Naive thymus-derived CD4-positive, alpha-beta T cell (primary cell): ENCODE measurements at regions of chr1 and their contacts with region 1.

Region 1: GRCh38 chr1:56709269-56709880 is 64.3 kb downstream of the PRKAA2 start:
- DNase-seq: peak in 7 of 9 donors; percentile 0 to 25 (median 4)
- ATAC-seq: no peak
- H3K4me3 ChIP-seq: no peak overlapping the region
- H3K4me3 Mint-ChIP-seq: no peak overlapping the region
- H3K27ac ChIP-seq: no peak overlapping the region
- H3K27ac Mint-ChIP-seq: peak overlapping the region in 1 of 9 donors; percentile 28
- H3K4me1 ChIP-seq: no peaks in the 10 kb centered on the region
- H3K4me1 Mint-ChIP-seq: no peaks in the 10 kb centered on the region
- H3K27me3 ChIP-seq: no peaks in the 10 kb centered on the region
- H3K27me3 Mint-ChIP-seq: peaks cover 7 to 44% (median 17%) of the 10 kb centered on the region in 5 donors

Region 2: DNA sequence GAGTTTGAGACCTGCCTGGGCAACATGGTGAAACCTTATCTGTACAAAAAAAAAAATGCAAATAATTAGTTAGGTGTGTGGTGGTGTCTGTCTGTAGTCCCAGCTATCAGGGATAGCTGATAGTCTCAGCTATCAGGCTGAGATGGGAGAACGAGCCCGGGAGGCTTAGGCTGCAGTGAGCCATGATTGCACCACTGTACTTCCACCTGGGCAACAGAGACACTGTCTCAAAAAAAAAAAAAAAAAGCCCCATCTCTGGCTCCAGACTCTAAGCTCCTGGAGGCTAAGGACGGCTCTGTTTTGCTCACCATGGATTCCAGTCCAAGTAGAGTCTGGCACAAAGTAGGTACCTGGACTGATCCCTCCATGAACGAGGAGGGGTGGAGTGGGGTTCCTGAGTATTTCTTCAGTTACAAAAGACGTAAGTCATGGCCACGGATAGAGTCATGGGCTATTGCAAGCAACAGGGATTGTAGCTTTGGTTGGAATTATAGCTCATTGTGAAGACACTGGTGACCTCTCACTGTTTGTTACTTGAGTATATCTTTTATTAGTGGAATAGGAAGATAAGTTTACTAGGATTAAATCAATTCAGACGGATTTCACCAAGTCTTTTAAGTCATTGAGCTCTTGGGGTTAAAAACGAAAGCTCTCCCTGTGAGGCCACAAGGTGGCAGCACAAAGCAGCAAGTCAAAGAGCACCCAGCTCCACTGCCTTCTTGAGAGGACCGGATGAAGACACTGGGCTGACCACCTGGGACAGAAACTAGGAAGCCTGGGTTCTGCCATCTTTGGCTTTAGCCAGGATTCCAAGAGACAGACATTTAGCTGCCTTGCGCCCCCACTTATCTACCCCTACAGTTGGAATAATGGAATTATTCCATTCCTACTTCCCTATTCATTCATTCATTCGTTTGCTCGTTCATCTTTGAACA is 1764.5 kb before region 1 on chr1:
- CTCF ChIA-PET with region 1: interaction called, 3 read pairs
- POLR2A ChIA-PET with region 1: no interaction called
- intact Hi-C with region 1: loop called in 1 of 2 experiments (anchors 10 kb)
- DNase-seq: peak; percentile 17 to 61 (median 45)
- ATAC-seq: peak; percentile 80
- H3K4me3 ChIP-seq: no peak overlapping the region
- H3K4me3 Mint-ChIP-seq: peak overlapping the region in 1 of 10 donors; percentile 28
- H3K27ac ChIP-seq: no peak overlapping the region
- H3K27ac Mint-ChIP-seq: no peak overlapping the region
- H3K4me1 ChIP-seq: peaks cover 3 to 7% of the 10 kb centered on the region in 2 donors
- H3K4me1 Mint-ChIP-seq: peaks cover 9 to 16% (median 11%) of the 10 kb centered on the region in 7 donors
- H3K27me3 ChIP-seq: no peaks in the 10 kb centered on the region
- H3K27me3 Mint-ChIP-seq: peaks cover 0 to 11% (median 0%) of the 10 kb centered on the region in 5 donors

Region 3: GRCh38 chr1:55140546-55140983 is 1568.8 kb before region 1 on chr1:
- CTCF ChIA-PET with region 1: no interaction called
- POLR2A ChIA-PET with region 1: no interaction called
- intact Hi-C with region 1: loop called in 1 of 2 experiments (anchors 10 kb)
- DNase-seq: peak in 8 of 9 donors; percentile 51 to 79 (median 71)
- ATAC-seq: peak; percentile 97
- H3K4me3 ChIP-seq: no peak overlapping the region
- H3K4me3 Mint-ChIP-seq: peak overlapping the region in 1 of 10 donors; percentile 53
- H3K27ac ChIP-seq: no peak overlapping the region
- H3K27ac Mint-ChIP-seq: peak overlapping the region in 8 of 9 donors; percentile 55 to 76 (median 65)
- H3K4me1 ChIP-seq: peaks cover 0 to 5% of the 10 kb centered on the region in 2 donors
- H3K4me1 Mint-ChIP-seq: peaks cover 0 to 18% (median 12%) of the 10 kb centered on the region in 7 donors
- H3K27me3 ChIP-seq: no peaks in the 10 kb centered on the region
- H3K27me3 Mint-ChIP-seq: no peaks in the 10 kb centered on the region

Region 4: GRCh38 chr1:55284852-55285251 is 1424.5 kb before region 1 on chr1:
- CTCF ChIA-PET with region 1: interaction called, 3 read pairs
- POLR2A ChIA-PET with region 1: no interaction called
- intact Hi-C with region 1: loop called (anchors 5 to 10 kb)
- DNase-seq: peak in 1 of 9 donors; percentile 8
- ATAC-seq: no peak
- H3K4me3 ChIP-seq: no peak overlapping the region
- H3K4me3 Mint-ChIP-seq: no peak overlapping the region
- H3K27ac ChIP-seq: no peak overlapping the region
- H3K27ac Mint-ChIP-seq: no peak overlapping the region
- H3K4me1 ChIP-seq: no peaks in the 10 kb centered on the region
- H3K4me1 Mint-ChIP-seq: no peaks in the 10 kb centered on the region
- H3K27me3 ChIP-seq: no peaks in the 10 kb centered on the region
- H3K27me3 Mint-ChIP-seq: peaks cover 0 to 14% (median 0%) of the 10 kb centered on the region in 5 donors

Region 5: DNA sequence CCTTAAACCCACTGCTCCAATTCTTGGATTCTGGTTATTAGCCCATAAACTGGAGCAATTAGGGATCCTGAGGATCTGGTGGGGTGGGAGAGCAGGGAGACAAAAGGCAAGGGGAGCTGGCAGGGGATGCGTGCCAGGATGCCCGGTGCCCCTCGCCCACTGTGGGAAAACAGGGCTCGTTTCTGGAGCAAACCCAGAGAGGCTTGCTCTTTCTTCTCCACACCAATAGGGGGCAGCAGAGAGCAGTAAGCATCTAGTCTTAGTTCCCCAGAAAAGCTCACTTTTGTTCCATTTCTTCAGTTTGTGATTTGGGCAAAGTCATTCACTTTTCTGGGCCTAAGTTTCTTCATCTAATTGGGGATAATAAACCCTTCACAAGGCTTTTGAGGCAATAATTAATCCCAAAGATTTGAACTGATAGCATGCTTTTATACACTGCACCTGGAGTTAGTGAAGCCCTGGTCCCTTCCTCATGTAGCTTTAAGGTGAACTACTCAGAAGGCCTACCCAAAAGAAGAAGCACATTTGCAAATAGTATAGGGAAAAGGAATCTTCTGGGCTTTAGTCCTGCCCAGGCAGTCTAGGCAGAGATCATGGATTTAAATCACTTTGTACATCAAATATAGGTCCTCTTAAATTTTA is 1333.6 kb before region 1 on chr1:
- CTCF ChIA-PET with region 1: no interaction called
- POLR2A ChIA-PET with region 1: no interaction called
- intact Hi-C with region 1: loop called in 1 of 2 experiments (anchors 10 kb)
- DNase-seq: peak in 5 of 9 donors; percentile 3 to 31 (median 20)
- ATAC-seq: peak; percentile 46
- H3K4me3 ChIP-seq: no peak overlapping the region
- H3K4me3 Mint-ChIP-seq: no peak overlapping the region
- H3K27ac ChIP-seq: no peak overlapping the region
- H3K27ac Mint-ChIP-seq: no peak overlapping the region
- H3K4me1 ChIP-seq: no peaks in the 10 kb centered on the region
- H3K4me1 Mint-ChIP-seq: peaks cover 1 to 14% (median 11%) of the 10 kb centered on the region in 7 donors
- H3K27me3 ChIP-seq: no peaks in the 10 kb centered on the region
- H3K27me3 Mint-ChIP-seq: peaks cover 0 to 6% (median 0%) of the 10 kb centered on the region in 5 donors